Activated CD4-positive, alpha-beta memory T cell treated with anti-CD3 and anti-CD28 coated beads for 36 hours (primary cell): ENCODE measurements at regions of chr13 and their contacts with region 1.

Region 1: GRCh38 chr13:48879432-48879831 is 96.3 kb upstream of the FNDC3A start:
- DNase-seq: no peak
- H3K4me3 Mint-ChIP-seq: no peak overlapping the region
- H3K27ac Mint-ChIP-seq: no peak overlapping the region
- H3K4me1 Mint-ChIP-seq: peaks cover 42% of the 10 kb centered on the region
- H3K27me3 Mint-ChIP-seq: no peaks in the 10 kb centered on the region

Region 2: DNA sequence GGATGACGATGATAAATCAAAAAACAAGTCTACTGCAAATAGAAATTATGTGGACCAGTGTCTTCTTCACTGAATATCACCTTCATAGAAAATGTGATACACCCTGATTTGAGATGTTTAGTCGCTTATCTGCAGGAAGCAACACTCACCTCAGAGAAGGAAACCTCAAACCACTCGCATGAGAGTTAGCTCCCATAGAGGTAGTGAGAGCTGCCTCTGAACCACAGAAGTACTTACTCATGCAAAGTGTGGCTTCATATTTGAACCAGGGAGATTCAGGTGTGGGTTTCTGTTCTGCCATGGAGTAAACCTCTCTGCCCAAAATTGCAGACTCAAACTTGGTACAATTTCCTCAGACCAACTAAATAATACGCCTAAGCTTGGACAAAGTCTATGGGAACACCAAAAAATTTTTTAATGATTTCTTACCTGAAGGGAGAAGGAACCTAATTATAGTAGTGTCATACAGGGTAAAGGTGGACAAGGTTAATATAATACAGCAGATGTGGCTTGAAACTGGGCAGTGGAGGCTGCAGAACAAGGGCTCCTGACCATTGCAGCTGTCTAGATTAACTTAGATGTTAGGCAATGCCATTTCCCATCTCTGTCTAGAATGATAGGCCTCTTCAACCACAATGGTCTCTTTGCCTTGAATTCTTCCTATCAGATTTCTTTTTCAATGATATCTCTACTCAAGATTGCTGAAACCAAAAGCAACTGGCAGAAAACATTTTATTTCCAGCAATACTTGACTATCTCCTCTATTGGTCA is 317.0 kb before region 1 on chr13:
- CTCF ChIA-PET with region 1: no interaction called
- POLR2A ChIA-PET with region 1: no interaction called
- intact Hi-C with region 1: loop called (anchors 1 kb)
- DNase-seq: peak; percentile 79
- H3K4me3 Mint-ChIP-seq: peak overlapping the region; percentile 31
- H3K27ac Mint-ChIP-seq: peak overlapping the region; percentile 58
- H3K4me1 Mint-ChIP-seq: peaks cover 43% of the 10 kb centered on the region
- H3K27me3 Mint-ChIP-seq: peaks cover 52% of the 10 kb centered on the region

Region 3: DNA sequence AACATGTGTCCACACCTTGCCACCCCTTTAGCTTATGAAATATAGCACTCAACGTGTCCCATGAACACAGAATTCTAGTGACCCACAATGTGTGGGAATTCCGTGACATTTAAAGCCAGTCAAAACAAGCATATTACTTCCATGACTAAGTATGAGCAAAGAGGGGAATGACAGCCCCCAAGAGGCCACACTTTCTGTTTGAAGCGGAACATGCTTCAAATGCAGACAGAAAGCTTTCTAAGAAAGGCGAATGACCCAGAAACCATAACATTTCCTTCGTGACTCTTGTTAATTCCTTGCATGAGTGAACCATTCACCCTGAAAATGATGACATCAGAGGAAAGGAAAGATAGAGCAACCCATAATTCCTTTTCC is 25.7 kb before region 1 on chr13:
- CTCF ChIA-PET with region 1: interaction called, 3 read pairs
- POLR2A ChIA-PET with region 1: interaction called, 17 read pairs
- intact Hi-C with region 1: loop called (anchors 1 kb)
- DNase-seq: peak; percentile 53
- H3K4me3 Mint-ChIP-seq: no peak overlapping the region
- H3K27ac Mint-ChIP-seq: peak overlapping the region; percentile 31
- H3K4me1 Mint-ChIP-seq: peaks cover 37% of the 10 kb centered on the region
- H3K27me3 Mint-ChIP-seq: peaks cover 6% of the 10 kb centered on the region

Region 4: GRCh38 chr13:48892053-48892690 is 12.7 kb after region 1 on chr13:
- CTCF ChIA-PET with region 1: interaction called, 3 read pairs
- POLR2A ChIA-PET with region 1: interaction called, 6 read pairs
- intact Hi-C with region 1: loop called (anchors 1 kb)
- DNase-seq: no peak
- H3K4me3 Mint-ChIP-seq: no peak overlapping the region
- H3K27ac Mint-ChIP-seq: peak overlapping the region; percentile 49
- H3K4me1 Mint-ChIP-seq: peaks cover 36% of the 10 kb centered on the region
- H3K27me3 Mint-ChIP-seq: peaks cover 3% of the 10 kb centered on the region

Region 5: DNA sequence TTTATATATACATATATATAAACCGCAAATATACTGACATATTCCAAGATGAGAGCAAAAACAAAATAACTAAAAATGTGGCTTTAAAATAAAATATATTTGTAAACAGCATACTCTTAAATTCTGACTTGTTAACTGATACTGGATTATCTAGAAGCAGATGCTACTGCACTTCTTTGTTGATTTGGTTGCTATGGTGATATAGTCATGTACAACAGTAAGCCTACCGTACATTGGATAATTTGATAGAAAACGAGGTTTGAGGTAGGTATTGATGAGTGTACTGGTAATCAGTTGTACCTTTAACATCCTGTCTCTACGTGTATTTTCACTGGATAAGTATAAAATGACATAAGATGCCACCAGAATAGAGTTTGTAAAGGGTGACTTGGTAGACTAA is 153.7 kb after region 1 on chr13:
- CTCF ChIA-PET with region 1: no interaction called
- POLR2A ChIA-PET with region 1: no interaction called
- intact Hi-C with region 1: no loop called
- DNase-seq: no peak
- H3K4me3 Mint-ChIP-seq: no peak overlapping the region
- H3K27ac Mint-ChIP-seq: no peak overlapping the region
- H3K4me1 Mint-ChIP-seq: peaks cover 17% of the 10 kb centered on the region
- H3K27me3 Mint-ChIP-seq: no peaks in the 10 kb centered on the region

Region 6: DNA sequence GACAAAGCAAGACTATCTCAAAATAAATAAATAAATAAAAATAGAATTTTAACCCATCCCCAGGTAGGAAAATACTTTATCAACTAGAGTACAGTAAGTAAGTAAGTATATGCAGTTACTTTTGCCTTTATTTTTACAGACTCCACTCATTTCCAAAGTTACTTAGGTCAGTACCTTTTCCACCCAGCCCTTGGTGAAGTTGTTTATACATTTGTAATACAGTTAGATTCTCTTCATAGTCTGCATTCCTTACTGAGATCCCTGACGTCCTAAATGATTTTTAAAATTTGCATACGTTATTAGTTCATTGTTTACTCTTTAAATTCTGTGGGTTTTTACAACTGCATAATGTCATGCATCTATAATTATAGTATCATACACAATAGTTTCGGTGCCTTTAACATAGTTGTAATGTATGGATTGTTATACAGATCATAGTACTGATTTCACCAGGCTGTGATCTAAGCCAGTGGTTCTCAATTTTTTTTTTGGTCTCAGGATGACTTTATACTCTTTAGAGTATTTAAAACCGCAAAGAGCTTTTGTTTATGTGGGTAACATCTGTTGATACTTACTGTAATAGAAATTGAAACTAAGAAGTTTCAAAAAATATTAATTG is 575.1 kb after region 1 on chr13:
- CTCF ChIA-PET with region 1: no interaction called
- POLR2A ChIA-PET with region 1: no interaction called
- intact Hi-C with region 1: loop called (anchors 5 kb)
- DNase-seq: no peak
- H3K4me3 Mint-ChIP-seq: no peak overlapping the region
- H3K27ac Mint-ChIP-seq: peak overlapping the region; percentile 79
- H3K4me1 Mint-ChIP-seq: peaks cover 35% of the 10 kb centered on the region
- H3K27me3 Mint-ChIP-seq: no peaks in the 10 kb centered on the region